GM12878 (cell line): ENCODE measurements at regions of chr12 and their contacts with region 1.

Region 1: DNA sequence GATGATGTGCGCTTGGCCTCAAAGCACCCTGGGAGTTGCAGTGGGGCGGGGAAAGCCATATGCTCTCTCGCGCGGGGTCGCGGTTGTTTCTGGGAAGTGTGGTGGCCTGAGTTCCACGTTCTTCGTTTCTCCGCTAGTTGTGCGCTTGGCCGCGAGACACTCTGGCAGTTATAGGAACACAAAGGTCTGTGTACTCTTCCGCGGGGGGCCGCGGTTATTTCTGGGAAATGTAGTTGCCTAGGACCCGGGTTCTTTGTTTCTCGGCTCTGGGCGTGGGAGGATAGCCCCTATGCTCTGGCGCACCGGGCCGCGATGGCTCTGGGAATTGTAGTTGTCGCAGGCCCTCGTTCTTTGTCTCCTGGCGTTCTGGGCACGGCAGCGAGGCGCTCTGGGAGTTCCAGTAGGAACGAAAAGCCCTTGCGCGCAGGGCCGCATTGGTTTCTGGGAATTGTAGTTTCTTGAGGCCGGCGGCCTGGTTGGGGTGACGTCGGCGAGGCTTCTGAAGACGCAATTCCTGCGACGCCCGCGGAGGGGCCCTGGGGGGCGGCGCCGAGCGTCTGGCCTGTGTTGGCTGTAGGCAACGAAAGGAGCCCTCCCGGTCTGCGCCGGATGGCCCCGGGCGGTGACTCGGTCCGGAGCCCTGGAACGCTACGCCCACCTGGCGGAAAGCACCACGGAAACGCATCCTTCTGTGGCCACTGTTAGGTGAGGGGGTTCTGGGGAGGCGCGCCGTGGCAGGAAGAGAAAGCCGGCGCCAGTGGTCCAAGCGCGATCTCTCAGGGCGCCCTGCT is at the start of gene ZNF140:
- DNase-seq: peak; percentile 76
- ATAC-seq: peak; percentile 86
- H3K4me3 ChIP-seq: peak within 1 kb of the TSS; percentile 81
- H3K27ac ChIP-seq: peak within 1 kb of the TSS; percentile 93
- H3K4me1 ChIP-seq: no peaks in the 10 kb centered on the region
- H3K27me3 ChIP-seq: no peaks in the 10 kb centered on the region
- CTCF ChIP-seq: peak; percentile 18 to 38 (median 20); a peak in 4 of 6 replicates
- EP300 ChIP-seq: no peak
- POLR2A ChIP-seq: peak; percentile 88
- RAD21 ChIP-seq: peak; percentile 41
- polyA plus RNA-seq, gene ZNF140: 6.8 to 7.4 TPM

Region 2: DNA sequence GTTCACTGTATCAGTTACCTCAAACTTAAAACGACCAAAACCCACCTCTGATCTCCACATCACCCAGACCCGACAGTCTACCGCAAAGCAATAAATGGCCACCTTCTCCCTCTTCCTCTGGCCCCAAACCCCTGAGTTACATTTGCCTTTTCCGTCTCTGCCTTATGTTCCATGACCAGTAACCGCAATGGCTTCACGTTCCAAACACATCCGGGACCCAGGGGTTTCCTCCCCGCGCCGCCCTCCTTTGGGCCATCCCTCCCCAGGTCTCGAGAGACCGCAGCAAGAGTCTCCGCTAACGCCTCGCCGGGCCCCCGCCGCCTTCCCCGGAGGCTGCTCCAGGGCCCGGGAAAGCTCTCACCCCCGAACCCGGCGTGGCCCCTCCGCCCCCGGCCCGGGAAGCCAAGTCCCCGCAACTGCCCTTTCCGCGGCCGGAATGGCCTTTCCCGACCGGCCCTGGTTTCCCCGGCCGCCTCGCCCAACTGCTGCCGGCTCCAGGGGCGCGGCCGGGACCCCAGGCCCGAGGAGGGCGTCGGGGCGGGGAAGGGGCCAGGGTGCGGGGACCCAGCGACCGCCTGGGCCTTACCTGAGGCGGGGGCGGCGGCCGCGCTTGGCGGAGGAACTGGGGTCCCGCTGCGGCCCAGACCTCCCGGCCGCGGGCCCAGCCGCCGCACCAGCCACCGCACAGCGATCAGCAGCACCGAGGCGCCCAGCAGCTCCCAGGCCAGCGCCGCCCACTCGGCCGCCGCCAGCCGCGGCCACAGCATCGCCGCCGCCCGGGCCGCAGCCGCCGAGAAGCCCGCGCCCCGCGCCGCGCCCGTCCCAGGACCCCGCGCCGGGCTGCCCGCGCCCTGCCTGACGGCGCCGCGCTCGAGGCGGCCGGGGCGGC is 319.3 kb before region 1 on chr12 and contains the start of gene ANKLE2:
- CTCF ChIA-PET with region 1: no interaction called
- POLR2A ChIA-PET with region 1: no interaction called
- RAD21 ChIA-PET with region 1: no interaction called
- SMC1A ChIA-PET with region 1: no interaction called
- in situ Hi-C with region 1: no loop called
- intact Hi-C with region 1: loop called (anchors 5 kb)
- DNase-seq: no peak
- ATAC-seq: peak; percentile 45
- H3K4me3 ChIP-seq: peak within 1 kb of the TSS; percentile 90
- H3K27ac ChIP-seq: peak within 1 kb of the TSS; percentile 85
- H3K4me1 ChIP-seq: no peaks in the 10 kb centered on the region
- H3K27me3 ChIP-seq: no peaks in the 10 kb centered on the region
- CTCF ChIP-seq: no peak
- EP300 ChIP-seq: no peak
- POLR2A ChIP-seq: peak; percentile 42; the same call in 1 of the 2 replicates
- RAD21 ChIP-seq: no peak
- polyA plus RNA-seq, gene ANKLE2: 4.3 to 6.7 TPM

Region 3: GRCh38 chr12:132956011-132956788 is 124.4 kb before region 1 on chr12 and contains the start of gene ZNF605:
- CTCF ChIA-PET with region 1: no interaction called
- POLR2A ChIA-PET with region 1: no interaction called
- RAD21 ChIA-PET with region 1: interaction called, 3 read pairs
- SMC1A ChIA-PET with region 1: no interaction called
- in situ Hi-C with region 1: no loop called
- intact Hi-C with region 1: loop called (anchors 1 kb)
- DNase-seq: peak; percentile 37
- ATAC-seq: peak; percentile 97
- H3K4me3 ChIP-seq: peak within 1 kb of the TSS; percentile 86
- H3K27ac ChIP-seq: peak within 1 kb of the TSS; percentile 76
- H3K4me1 ChIP-seq: no peaks in the 10 kb centered on the region; the same call in 1 of the 2 replicates
- H3K27me3 ChIP-seq: no peaks in the 10 kb centered on the region
- CTCF ChIP-seq: no peak
- EP300 ChIP-seq: no peak
- POLR2A ChIP-seq: peak; percentile 75
- RAD21 ChIP-seq: no peak
- polyA plus RNA-seq, gene ZNF605: 0.95 to 1.3 TPM

Region 4: GRCh38 chr12:132986001-132986912 is 94.3 kb before region 1 on chr12 and contains the start of gene ZNF26:
- CTCF ChIA-PET with region 1: interaction called, 3 read pairs
- POLR2A ChIA-PET with region 1: no interaction called
- RAD21 ChIA-PET with region 1: interaction called, 8 read pairs
- SMC1A ChIA-PET with region 1: interaction called, 4 read pairs
- in situ Hi-C with region 1: loop called (anchors 5 kb)
- intact Hi-C with region 1: loop called (anchors 1 kb)
- DNase-seq: peak; percentile 72
- ATAC-seq: peak; percentile 99
- H3K4me3 ChIP-seq: peak within 1 kb of the TSS; percentile 83
- H3K27ac ChIP-seq: peak within 1 kb of the TSS; percentile 82
- H3K4me1 ChIP-seq: peaks cover 4% of the 10 kb centered on the region; the same call in 1 of the 2 replicates
- H3K27me3 ChIP-seq: no peaks in the 10 kb centered on the region
- CTCF ChIP-seq: no peak
- EP300 ChIP-seq: peak in 1 of 2 experiments; percentile 18; a peak in 1 of 4 replicates
- POLR2A ChIP-seq: peak; percentile 95
- RAD21 ChIP-seq: no peak
- polyA plus RNA-seq, gene ZNF26: 1.00 to 1.4 TPM

Region 5: GRCh38 chr12:133037207-133038005 is 43.2 kb before region 1 on chr12 and contains the start of gene ZNF84:
- CTCF ChIA-PET with region 1: no interaction called
- POLR2A ChIA-PET with region 1: no interaction called
- RAD21 ChIA-PET with region 1: no interaction called
- SMC1A ChIA-PET with region 1: interaction called, 3 read pairs
- in situ Hi-C with region 1: no loop called
- intact Hi-C with region 1: loop called (anchors 1 kb)
- DNase-seq: peak; percentile 96
- ATAC-seq: peak; percentile 98
- H3K4me3 ChIP-seq: peak within 1 kb of the TSS; percentile 77
- H3K27ac ChIP-seq: peak within 1 kb of the TSS; percentile 79
- H3K4me1 ChIP-seq: no peaks in the 10 kb centered on the region
- H3K27me3 ChIP-seq: no peaks in the 10 kb centered on the region
- CTCF ChIP-seq: no peak
- EP300 ChIP-seq: no peak
- POLR2A ChIP-seq: peak; percentile 82
- RAD21 ChIP-seq: no peak
- polyA plus RNA-seq, gene ZNF84: 10.4 to 11.9 TPM

Region 6: DNA sequence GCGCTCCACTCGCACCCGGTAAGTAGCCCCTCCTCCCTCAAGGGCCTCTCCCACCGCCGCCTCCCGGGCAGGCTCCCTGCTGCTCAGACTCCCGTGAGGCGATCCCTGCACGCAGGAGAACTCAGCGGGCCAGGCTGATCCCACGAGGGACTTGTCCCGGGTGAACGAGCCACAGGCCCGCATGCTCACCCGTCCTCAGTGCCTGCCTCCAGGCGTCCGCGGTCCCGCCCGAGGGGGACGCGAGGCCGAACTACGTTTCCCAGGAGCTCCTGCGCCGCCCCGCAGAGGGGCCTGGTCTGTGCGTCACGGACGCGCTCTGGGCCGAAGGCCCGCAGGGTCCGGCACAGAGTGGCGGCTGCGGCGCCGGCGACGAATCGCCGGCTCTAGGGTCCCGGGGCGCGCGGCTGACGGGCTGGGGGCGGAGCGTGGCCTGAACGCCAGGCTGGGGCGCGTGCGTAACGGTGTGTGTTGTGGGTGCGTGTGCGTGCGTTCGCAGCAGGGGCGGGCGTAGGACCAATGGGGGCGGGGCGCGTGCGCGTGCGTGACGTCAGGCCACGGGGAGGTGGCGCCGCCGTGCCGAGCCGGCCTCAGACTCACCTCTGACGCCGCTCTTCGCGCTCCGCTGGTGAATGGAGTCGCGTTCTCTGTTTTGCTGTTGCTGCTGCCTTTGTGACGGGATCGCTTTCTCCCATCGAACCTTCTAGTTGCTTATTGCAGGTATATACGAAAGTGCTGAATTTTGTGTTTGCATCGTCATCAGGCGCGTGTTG is 49.7 kb after region 1 on chr12 and contains the starts of genes ZNF10 and ZNF891:
- CTCF ChIA-PET with region 1: no interaction called
- POLR2A ChIA-PET with region 1: interaction called, 3 read pairs
- RAD21 ChIA-PET with region 1: no interaction called
- SMC1A ChIA-PET with region 1: interaction called, 3 read pairs
- in situ Hi-C with region 1: no loop called
- intact Hi-C with region 1: loop called (anchors 1 kb)
- DNase-seq: peak; percentile 76
- ATAC-seq: peak; percentile 97
- H3K4me3 ChIP-seq: peak within 1 kb of the TSS; percentile 92
- H3K27ac ChIP-seq: peak within 1 kb of the TSS; percentile 59
- H3K4me1 ChIP-seq: no peaks in the 10 kb centered on the region
- H3K27me3 ChIP-seq: no peaks in the 10 kb centered on the region
- CTCF ChIP-seq: no peak
- EP300 ChIP-seq: no peak
- POLR2A ChIP-seq: peak; percentile 91
- RAD21 ChIP-seq: no peak
- polyA plus RNA-seq, gene ZNF10: 1.8 to 2.5 TPM
- polyA plus RNA-seq, gene ZNF891: 0.20 to 0.29 TPM

Region 7: GRCh38 chr12:133181238-133181959 is 100.8 kb after region 1 on chr12 and contains the start of gene ZNF268:
- CTCF ChIA-PET with region 1: interaction called, 12 read pairs
- POLR2A ChIA-PET with region 1: interaction called, 6 read pairs
- RAD21 ChIA-PET with region 1: interaction called, 4 read pairs
- SMC1A ChIA-PET with region 1: interaction called, 12 read pairs
- in situ Hi-C with region 1: no loop called
- intact Hi-C with region 1: loop called (anchors 1 kb)
- DNase-seq: peak; percentile 61
- ATAC-seq: peak; percentile 98
- H3K4me3 ChIP-seq: peak within 1 kb of the TSS; percentile 88
- H3K27ac ChIP-seq: peak within 1 kb of the TSS; percentile 80
- H3K4me1 ChIP-seq: no peaks in the 10 kb centered on the region
- H3K27me3 ChIP-seq: no peaks in the 10 kb centered on the region
- CTCF ChIP-seq: peak; percentile 74 to 96 (median 75)
- EP300 ChIP-seq: no peak
- POLR2A ChIP-seq: peak; percentile 89
- RAD21 ChIP-seq: peak; percentile 56; the same call in 1 of the 2 replicates
- polyA plus RNA-seq, gene ZNF268: 9.4 to 11.4 TPM